ENCODE measurements at regions of chr17 and their contacts with region 1.

Region 1: GRCh38 chr17:4412933-4413831 is 20.6 kb upstream of the SPNS3 start:
- DNase-seq: peak; percentile 93
- H3K4me3 ChIP-seq: no peak overlapping the region; the same call in 1 of the 2 replicates
- H3K27ac ChIP-seq: no peak overlapping the region
- H3K4me1 ChIP-seq: no peaks in the 10 kb centered on the region
- H3K27me3 ChIP-seq: no peaks in the 10 kb centered on the region

Region 2: GRCh38 chr17:4215882-4216570 is 197.2 kb before region 1 on chr17:
- in situ Hi-C with region 1: loop called (anchors 10 kb)
- DNase-seq: no peak
- H3K4me3 ChIP-seq: no peak overlapping the region
- H3K27ac ChIP-seq: no peak overlapping the region
- H3K4me1 ChIP-seq: 0 out of 2 replicates have a peak, but pooled peaks cover 4% of the 10 kb centered on the region
- H3K27me3 ChIP-seq: no peaks in the 10 kb centered on the region

Region 3: GRCh38 chr17:4872786-4873185 is 459.6 kb after region 1 on chr17:
- in situ Hi-C with region 1: no loop called
- DNase-seq: no peak
- H3K4me3 ChIP-seq: no peak overlapping the region
- H3K27ac ChIP-seq: no peak overlapping the region
- H3K4me1 ChIP-seq: no peaks in the 10 kb centered on the region
- H3K27me3 ChIP-seq: no peaks in the 10 kb centered on the region